IMR-90 (cell line): ENCODE measurements at regions of chr5 and their contacts with region 1.

Region 1: DNA sequence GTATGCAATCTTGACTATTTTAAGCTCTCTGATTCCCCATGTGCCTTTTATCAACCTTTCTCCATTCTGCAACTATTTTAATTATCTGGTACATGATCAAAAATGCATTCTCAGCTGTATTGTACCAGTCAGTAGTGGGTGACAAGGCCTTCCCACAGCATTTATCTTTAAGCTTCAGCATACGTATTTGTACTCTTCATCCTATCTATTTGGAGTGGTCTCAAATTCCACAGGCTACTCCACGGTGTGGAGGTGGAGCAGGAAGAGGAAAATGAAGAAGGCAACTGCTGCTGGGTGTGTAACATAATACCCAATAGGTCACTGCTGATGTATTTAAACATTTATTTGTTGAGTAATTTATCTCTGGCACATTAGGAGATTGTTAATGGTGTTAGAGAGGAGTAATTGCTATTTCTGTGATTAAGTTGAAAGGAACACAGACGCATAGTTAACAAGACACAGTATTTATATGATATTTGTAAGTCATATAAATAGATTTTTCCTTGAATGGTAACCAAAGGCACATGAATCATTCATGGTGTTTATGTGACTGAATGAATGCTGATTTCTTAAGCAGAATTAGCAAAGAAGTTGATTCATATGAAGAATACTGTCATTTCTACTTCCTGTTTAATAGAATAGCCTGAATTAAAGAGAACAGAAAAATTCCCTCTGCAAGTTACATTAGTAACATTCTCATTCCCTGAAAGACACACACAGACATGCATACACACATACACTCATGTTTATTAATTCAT is 153.8 kb upstream of the NR3C1 start:
- DNase-seq: peak; percentile 94
- ATAC-seq: peak; percentile 68
- H3K4me3 ChIP-seq: no peak overlapping the region
- H3K27ac ChIP-seq: peak overlapping the region; percentile 26
- H3K4me1 ChIP-seq: peaks cover 10% of the 10 kb centered on the region
- H3K27me3 ChIP-seq: no peaks in the 10 kb centered on the region
- CTCF ChIP-seq: no peak
- POLR2A ChIP-seq: no peak
- RAD21 ChIP-seq: no peak

Region 2: DNA sequence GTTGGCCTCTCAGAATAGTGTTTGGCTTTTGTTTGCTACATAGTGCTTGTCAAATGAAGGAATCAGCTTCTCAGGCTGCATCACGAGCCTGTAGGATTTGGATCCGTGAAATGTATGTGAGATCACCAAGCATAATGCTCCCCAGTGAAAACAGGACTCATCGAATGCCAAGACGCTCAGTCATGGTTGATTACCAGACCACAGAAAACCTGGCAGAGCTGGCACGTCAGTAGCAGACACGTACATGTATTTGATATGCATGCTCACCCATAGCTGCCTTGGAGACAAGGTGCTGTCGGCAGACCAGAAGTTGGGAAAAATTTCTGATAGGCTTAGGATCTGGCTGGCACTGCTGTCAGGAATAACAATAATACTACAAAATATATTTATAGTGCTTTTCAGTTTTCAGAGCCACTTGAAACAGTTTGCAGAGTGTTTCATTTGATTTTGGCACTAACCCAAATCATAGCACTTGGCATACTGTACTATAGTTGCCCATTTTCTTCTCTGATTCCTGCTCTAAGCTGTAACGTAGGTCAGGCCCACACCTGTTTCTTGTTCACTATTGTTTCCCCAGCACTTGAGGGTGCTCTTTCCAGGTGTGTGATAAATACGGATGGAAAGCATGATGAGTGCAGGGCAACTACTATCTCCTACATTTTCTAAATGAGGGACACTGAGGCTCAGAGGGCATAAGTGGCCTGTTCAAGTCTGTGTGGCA is 379.8 kb before region 1 on chr5:
- CTCF ChIA-PET with region 1: no interaction called
- POLR2A ChIA-PET with region 1: no interaction called
- dilution Hi-C with region 1: no loop called
- in situ Hi-C with region 1: no loop called
- intact Hi-C with region 1: no loop called
- DNase-seq: peak; percentile 99
- ATAC-seq: peak; percentile 89
- H3K4me3 ChIP-seq: no peak overlapping the region
- H3K27ac ChIP-seq: no peak overlapping the region
- H3K4me1 ChIP-seq: peaks cover 6% of the 10 kb centered on the region; the same call in 1 of the 2 replicates
- H3K27me3 ChIP-seq: no peaks in the 10 kb centered on the region
- CTCF ChIP-seq: no peak
- POLR2A ChIP-seq: no peak; the same call in 1 of the 2 replicates
- RAD21 ChIP-seq: peak; percentile 36

Region 3: DNA sequence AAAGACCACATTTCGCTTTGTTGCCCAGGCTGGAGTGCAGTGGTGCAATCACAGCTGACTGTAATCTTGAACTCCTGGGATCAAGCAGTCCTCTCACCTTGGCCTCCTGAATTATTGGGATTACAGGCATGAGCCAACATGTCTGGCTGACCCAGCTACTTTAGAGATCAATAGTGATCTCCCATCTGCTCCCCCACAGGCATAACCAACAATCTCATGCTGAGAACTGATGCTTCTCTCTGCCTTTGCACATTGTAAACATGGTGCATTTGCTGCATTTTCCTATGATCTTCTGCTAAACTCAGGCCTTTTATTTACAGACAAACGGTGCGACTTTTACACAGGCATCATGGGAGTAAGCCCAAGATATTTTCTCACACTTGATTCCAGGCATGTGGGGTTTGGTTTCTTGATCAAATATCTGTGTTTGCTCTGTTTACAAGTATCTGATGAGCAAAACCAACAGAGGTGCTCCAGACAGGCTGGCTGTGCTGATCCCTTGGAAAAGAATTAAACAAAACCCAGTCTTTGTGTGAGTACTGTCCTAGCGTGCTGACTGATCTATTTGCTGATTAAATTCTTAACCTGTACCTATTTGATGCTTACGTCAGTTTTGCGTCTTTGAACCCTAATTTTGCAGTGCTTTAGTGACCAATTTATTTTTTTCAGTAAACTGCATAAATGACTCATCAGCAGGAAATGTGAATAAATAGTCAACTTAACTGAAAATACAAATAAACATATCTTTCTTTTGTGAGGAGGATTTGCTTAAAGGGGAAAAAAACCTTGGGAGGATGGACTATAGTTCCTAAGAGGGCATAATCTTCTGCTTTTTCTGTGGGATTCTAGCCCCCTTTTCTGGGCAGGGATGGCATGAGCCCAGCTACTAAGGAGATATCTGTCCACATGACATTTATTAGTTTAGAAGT is 37.9 kb after region 1 on chr5:
- CTCF ChIA-PET with region 1: no interaction called
- POLR2A ChIA-PET with region 1: no interaction called
- dilution Hi-C with region 1: no loop called
- in situ Hi-C with region 1: no loop called
- intact Hi-C with region 1: loop called (anchors 1 kb)
- DNase-seq: peak; percentile 27
- ATAC-seq: peak; percentile 46
- H3K4me3 ChIP-seq: no peak overlapping the region
- H3K27ac ChIP-seq: no peak overlapping the region
- H3K4me1 ChIP-seq: peaks cover 13% of the 10 kb centered on the region
- H3K27me3 ChIP-seq: no peaks in the 10 kb centered on the region
- CTCF ChIP-seq: no peak
- POLR2A ChIP-seq: no peak
- RAD21 ChIP-seq: no peak